T-cell (primary cell): ENCODE measurements at regions of chr7 and their contacts with region 1.

Region 1: DNA sequence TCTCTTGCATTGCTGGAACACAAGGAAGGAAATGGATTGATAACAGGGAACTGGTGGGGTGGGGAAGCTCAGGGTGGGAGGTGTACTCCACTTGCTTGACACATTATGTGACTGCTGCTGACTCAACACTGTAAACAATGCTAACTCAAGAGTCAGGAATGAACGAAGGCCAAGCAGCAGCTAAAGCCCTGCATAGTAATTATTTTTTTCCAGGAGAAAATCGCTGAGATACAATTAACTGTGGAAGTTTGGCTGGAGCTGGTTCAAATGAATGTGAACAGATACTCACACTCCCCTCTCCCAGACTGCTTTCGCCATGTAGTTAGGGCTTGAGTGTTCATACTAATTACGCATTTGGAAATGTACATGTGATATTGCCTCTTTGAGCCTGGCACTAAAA is 170.9 kb upstream of the AOAH start:
- DNase-seq: no peak
- ATAC-seq: no peak
- H3K4me3 ChIP-seq: no peak overlapping the region
- H3K4me3 Mint-ChIP-seq: no peak overlapping the region
- H3K27ac ChIP-seq: no peak overlapping the region
- H3K27ac Mint-ChIP-seq: no peak overlapping the region
- H3K4me1 ChIP-seq: no peaks in the 10 kb centered on the region
- H3K4me1 Mint-ChIP-seq: peaks cover 8 to 23% (median 12%) of the 10 kb centered on the region in 3 donors
- H3K27me3 ChIP-seq: no peaks in the 10 kb centered on the region
- H3K27me3 Mint-ChIP-seq: no peaks in the 10 kb centered on the region

Region 2: DNA sequence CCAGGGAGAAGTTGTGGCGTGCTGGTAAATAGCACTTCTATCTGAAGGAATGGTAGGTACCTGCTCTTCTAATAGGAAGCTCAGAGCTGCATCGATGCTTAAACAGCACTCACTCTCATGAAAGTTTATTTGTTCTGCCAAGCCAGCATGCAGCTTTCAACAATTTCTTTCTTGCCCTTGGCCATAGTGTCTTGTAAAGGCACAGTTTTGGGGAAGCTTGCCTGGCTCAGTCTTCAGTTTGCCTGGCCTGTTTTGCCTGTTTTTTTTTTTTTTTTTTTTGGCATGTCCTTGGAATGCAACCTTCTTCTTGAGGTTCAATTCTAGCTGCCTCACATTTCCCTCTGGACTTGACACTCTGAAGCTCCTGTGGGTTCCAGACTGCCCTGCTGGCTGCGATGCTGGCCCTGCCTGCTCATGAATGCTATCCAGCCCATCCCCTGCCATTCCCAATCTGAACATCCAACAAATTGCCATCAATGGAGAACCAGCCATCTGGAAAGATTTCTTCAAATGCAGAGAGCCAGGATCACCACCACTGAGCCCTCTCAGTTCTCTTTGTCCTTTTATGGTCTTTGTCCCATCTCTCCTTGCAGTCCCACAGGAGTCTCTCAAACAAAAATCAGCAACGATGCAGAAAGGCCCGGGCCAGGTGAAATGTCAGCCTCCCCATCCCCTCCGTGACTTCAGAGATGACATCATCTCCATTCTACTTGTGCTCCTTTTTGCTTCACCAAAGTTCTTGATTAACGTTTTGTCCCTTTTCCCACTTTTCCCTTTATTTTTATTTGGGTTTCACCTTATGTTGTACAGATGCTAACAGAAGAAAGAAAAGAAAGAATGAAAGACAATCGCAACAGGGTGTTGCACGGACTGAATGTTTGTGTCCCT is 371.6 kb before region 1 on chr7:
- CTCF ChIA-PET with region 1: no interaction called
- POLR2A ChIA-PET with region 1: interaction called in 1 of 2 experiments, 10 read pairs
- DNase-seq: no peak
- ATAC-seq: no peak
- H3K4me3 ChIP-seq: no peak overlapping the region
- H3K4me3 Mint-ChIP-seq: no peak overlapping the region
- H3K27ac ChIP-seq: no peak overlapping the region
- H3K27ac Mint-ChIP-seq: no peak overlapping the region
- H3K4me1 ChIP-seq: no peaks in the 10 kb centered on the region
- H3K4me1 Mint-ChIP-seq: peaks cover 0 to 10% (median 7%) of the 10 kb centered on the region in 3 donors
- H3K27me3 ChIP-seq: no peaks in the 10 kb centered on the region
- H3K27me3 Mint-ChIP-seq: no peaks in the 10 kb centered on the region

Region 3: GRCh38 chr7:36979810-36980248 is 84.6 kb after region 1 on chr7:
- CTCF ChIA-PET with region 1: no interaction called
- POLR2A ChIA-PET with region 1: no interaction called
- DNase-seq: no peak
- ATAC-seq: no peak
- H3K4me3 ChIP-seq: no peak overlapping the region
- H3K4me3 Mint-ChIP-seq: no peak overlapping the region
- H3K27ac ChIP-seq: no peak overlapping the region
- H3K27ac Mint-ChIP-seq: no peak overlapping the region
- H3K4me1 ChIP-seq: no peaks in the 10 kb centered on the region
- H3K4me1 Mint-ChIP-seq: peaks cover 21 to 47% (median 23%) of the 10 kb centered on the region in 3 donors
- H3K27me3 ChIP-seq: no peaks in the 10 kb centered on the region
- H3K27me3 Mint-ChIP-seq: no peaks in the 10 kb centered on the region